GM10248 (cell line): ENCODE measurements at regions of chr12 and their contacts with region 1.

Region 1: DNA sequence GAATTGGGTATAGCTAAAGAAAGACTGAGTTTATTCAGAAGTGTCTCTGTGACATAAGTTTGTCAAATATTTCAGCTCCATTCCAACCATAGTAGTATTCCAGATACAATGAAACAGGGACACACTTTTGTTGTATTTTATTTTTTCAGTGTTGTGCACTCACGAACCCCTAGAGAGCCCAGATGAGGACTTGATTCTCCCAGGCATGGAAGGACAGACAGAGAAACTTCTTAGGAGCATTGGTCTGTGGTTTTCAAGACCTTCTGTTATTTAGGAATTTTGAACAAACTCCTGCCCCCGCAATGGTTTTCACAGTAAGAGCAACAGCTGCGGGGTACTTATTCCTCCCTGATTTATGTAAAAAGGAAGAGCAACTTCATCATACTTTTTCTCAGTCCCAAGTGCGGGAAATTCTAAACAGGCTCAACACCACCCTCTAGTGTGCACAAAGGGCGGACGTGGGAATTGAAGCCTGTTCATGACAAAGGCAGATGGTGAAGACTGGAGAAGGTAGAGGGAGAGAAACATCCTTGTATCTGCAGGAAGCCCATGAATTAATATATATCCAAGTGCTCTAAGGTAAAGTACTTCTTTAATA is 147.6 kb downstream of the PAH start:
- DNase-seq: peak; percentile 55
- CTCF ChIP-seq: peak; percentile 89

Region 2: GRCh38 chr12:102095675-102096263 is 673.6 kb before region 1 on chr12:
- CTCF ChIA-PET with region 1: interaction called, 10 read pairs
- POLR2A ChIA-PET with region 1: no interaction called
- DNase-seq: no peak
- CTCF ChIP-seq: peak; percentile 65

Region 3: GRCh38 chr12:102690253-102690652 is 79.2 kb before region 1 on chr12:
- CTCF ChIA-PET with region 1: no interaction called
- POLR2A ChIA-PET with region 1: no interaction called
- DNase-seq: no peak
- CTCF ChIP-seq: no peak

Region 4: DNA sequence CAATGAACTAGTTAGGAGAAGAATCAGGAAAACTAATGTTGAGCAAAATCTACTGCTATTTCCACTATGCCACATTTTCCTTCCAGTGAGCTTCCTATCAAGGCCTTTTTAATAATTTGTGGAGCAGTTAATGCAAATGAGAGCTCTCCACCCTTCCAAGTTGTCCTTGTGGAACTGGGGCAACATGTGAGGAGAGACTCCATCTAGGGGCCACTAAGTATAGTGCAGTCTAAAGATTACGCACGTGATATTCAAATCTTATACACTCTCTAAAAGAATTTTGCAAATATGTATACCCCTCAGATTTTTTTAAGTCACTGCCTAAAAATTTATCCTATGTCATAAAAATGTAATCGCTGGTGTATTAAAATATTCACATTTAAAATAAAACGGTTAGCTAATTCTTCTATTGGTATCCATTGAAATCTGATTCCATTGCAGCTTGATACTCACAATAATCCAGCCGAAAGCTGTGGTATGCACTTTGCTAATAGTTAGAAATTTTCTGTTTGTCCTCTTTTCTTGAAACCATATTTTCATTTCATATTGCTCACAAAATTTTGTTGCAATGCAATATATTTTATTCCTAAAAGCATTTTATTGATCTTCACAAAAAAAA is 47.5 kb after region 1 on chr12:
- CTCF ChIA-PET with region 1: interaction called, 3 read pairs
- POLR2A ChIA-PET with region 1: interaction called, 14 read pairs
- DNase-seq: peak; percentile 23
- CTCF ChIP-seq: peak; percentile 36

Region 5: GRCh38 chr12:102896067-102896466 is 126.6 kb after region 1 on chr12:
- CTCF ChIA-PET with region 1: no interaction called
- POLR2A ChIA-PET with region 1: no interaction called
- DNase-seq: no peak
- CTCF ChIP-seq: no peak